WTC11 (cell line): ENCODE measurements at regions of chr3 and their contacts with region 1.

Region 1: GRCh38 chr3:122299872-122300460 is 25.1 kb upstream of the CSTA start:
- DNase-seq: peak; percentile 35
- ATAC-seq: peak; percentile 73
- H3K4me3 Mint-ChIP-seq: no peak overlapping the region
- H3K27ac Mint-ChIP-seq: no peak overlapping the region
- H3K4me1 Mint-ChIP-seq: no peaks in the 10 kb centered on the region
- H3K27me3 Mint-ChIP-seq: no peaks in the 10 kb centered on the region
- CTCF ChIP-seq: peak; percentile 61; the same call in 1 of the 2 replicates

Region 2: DNA sequence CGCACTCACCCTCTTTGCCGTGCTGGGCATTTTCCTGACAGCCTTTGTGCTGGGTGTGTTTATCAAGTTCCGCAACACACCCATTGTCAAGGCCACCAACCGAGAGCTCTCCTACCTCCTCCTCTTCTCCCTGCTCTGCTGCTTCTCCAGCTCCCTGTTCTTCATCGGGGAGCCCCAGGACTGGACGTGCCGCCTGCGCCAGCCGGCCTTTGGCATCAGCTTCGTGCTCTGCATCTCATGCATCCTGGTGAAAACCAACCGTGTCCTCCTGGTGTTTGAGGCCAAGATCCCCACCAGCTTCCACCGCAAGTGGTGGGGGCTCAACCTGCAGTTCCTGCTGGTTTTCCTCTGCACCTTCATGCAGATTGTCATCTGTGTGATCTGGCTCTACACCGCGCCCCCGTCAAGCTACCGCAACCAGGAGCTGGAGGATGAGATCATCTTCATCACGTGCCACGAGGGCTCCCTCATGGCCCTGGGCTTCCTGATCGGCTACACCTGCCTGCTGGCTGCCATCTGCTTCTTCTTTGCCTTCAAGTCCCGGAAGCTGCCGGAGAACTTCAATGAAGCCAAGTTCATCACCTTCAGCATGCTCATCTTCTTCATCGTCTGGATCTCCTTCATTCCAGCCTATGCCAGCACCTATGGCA is 16.0 kb before region 1 on chr3:
- CTCF ChIA-PET with region 1: interaction called, 3 read pairs
- POLR2A ChIA-PET with region 1: interaction called, 13 read pairs
- DNase-seq: no peak
- ATAC-seq: no peak
- H3K4me3 Mint-ChIP-seq: no peak overlapping the region
- H3K27ac Mint-ChIP-seq: no peak overlapping the region
- H3K4me1 Mint-ChIP-seq: no peaks in the 10 kb centered on the region
- H3K27me3 Mint-ChIP-seq: no peaks in the 10 kb centered on the region; the same call in 1 of the 2 replicates
- CTCF ChIP-seq: no peak

Region 3: GRCh38 chr3:122314228-122314876 is 14.4 kb after region 1 on chr3:
- CTCF ChIA-PET with region 1: interaction called, 11 read pairs
- POLR2A ChIA-PET with region 1: no interaction called
- DNase-seq: no peak
- ATAC-seq: no peak
- H3K4me3 Mint-ChIP-seq: no peak overlapping the region
- H3K27ac Mint-ChIP-seq: no peak overlapping the region
- H3K4me1 Mint-ChIP-seq: peaks cover 16% of the 10 kb centered on the region
- H3K27me3 Mint-ChIP-seq: no peaks in the 10 kb centered on the region; the same call in 1 of the 2 replicates
- CTCF ChIP-seq: no peak